ENCODE measurements at regions of chr2 and their contacts with region 1.

Region 1: GRCh38 chr2:20333738-20334137 is 16.9 kb downstream of the PUM2 start:
- DNase-seq: no peak
- ATAC-seq: no peak
- H3K4me3 ChIP-seq: no peak overlapping the region
- H3K27ac ChIP-seq: no peak overlapping the region
- H3K4me1 ChIP-seq: peaks cover 8% of the 10 kb centered on the region; the same call in 1 of the 2 replicates
- H3K27me3 ChIP-seq: no peaks in the 10 kb centered on the region
- CTCF ChIP-seq: no peak

Region 2: GRCh38 chr2:20177556-20178248 is 156.0 kb before region 1 on chr2:
- CTCF ChIA-PET with region 1: interaction called, 10 read pairs
- POLR2A ChIA-PET with region 1: no interaction called
- in situ Hi-C with region 1: no loop called
- intact Hi-C with region 1: no loop called
- DNase-seq: no peak
- ATAC-seq: no peak
- H3K4me3 ChIP-seq: no peak overlapping the region
- H3K27ac ChIP-seq: no peak overlapping the region
- H3K4me1 ChIP-seq: no peaks in the 10 kb centered on the region
- H3K27me3 ChIP-seq: no peaks in the 10 kb centered on the region
- CTCF ChIP-seq: no peak

Region 3: DNA sequence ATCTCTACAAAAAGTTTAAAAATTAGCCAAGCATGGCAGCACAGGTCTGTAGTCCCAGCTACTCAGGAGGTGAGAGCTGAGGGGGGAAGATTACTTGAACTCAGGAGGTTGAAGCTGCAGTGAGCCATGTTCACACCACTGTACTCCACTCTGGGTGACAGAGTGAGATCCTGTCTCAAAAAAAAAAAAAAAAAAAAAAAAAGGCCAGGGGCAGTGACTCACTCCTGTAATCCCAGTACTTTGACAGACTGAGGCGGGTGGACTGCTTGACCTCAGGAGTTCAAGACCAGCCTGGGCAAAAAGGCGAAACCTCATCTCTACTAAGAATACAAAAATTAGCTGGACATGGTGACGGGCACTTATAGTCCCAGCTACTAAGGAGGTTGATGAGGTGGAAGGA is 20.1 kb before region 1 on chr2:
- CTCF ChIA-PET with region 1: no interaction called
- POLR2A ChIA-PET with region 1: interaction called, 13 read pairs
- in situ Hi-C with region 1: no loop called
- intact Hi-C with region 1: no loop called
- DNase-seq: no peak
- ATAC-seq: 0 out of 2 replicates have a peak, but pooled peaks have one; percentile 38
- H3K4me3 ChIP-seq: no peak overlapping the region
- H3K27ac ChIP-seq: no peak overlapping the region
- H3K4me1 ChIP-seq: no peaks in the 10 kb centered on the region
- H3K27me3 ChIP-seq: no peaks in the 10 kb centered on the region
- CTCF ChIP-seq: no peak

Measured in Panc1 (cell line).